A549 (cell line): ENCODE measurements at regions of chr19 and their contacts with region 1.

Region 1: GRCh38 chr19:13588957-13589833 is 82.9 kb upstream of the CACNA1A start:
- DNase-seq: peak; percentile 40 to 65
- ATAC-seq: peak; percentile 98 to 99
- H3K4me3 ChIP-seq: no peak overlapping the region
- H3K27ac ChIP-seq: no peak overlapping the region
- H3K4me1 ChIP-seq: no peaks in the 10 kb centered on the region
- CTCF ChIP-seq: peak; percentile 85
- EP300 ChIP-seq: no peak
- POLR2A ChIP-seq: no peak
- RAD21 ChIP-seq: peak; percentile 60 to 73; a peak in 4 of 5 replicates

Region 2: DNA sequence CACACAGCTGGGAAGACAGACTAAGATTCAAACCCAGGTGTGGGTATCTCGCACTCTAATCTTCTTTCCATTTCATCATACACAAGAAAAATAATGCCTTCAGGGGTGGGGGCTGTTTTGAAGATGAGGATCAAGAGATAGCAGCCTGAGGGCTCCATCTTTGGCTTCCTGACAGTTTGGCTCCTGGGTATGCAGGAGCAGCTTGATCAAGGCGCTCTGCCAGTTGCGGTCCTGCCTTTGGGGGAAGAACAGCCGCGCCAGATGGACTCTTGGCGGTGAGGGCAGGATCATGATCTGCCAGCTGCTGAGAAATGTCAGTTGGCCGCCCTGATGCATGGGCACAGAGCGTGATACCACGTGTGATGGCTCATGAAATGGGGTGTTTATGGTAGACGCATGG is 319.8 kb before region 1 on chr19:
- CTCF ChIA-PET with region 1: interaction called, 14 read pairs
- POLR2A ChIA-PET with region 1: no interaction called
- DNase-seq: no peak
- ATAC-seq: no peak
- H3K4me3 ChIP-seq: no peak overlapping the region
- H3K27ac ChIP-seq: no peak overlapping the region
- H3K4me1 ChIP-seq: no peaks in the 10 kb centered on the region
- CTCF ChIP-seq: no peak
- EP300 ChIP-seq: no peak
- POLR2A ChIP-seq: no peak
- RAD21 ChIP-seq: no peak

Region 3: GRCh38 chr19:13492128-13492527 is 97.1 kb before region 1 on chr19:
- CTCF ChIA-PET with region 1: no interaction called
- POLR2A ChIA-PET with region 1: no interaction called
- DNase-seq: peak in 1 of 2 experiments; percentile 4
- ATAC-seq: peak in 1 of 2 experiments; percentile 39; a peak in 2 of 6 replicates
- H3K4me3 ChIP-seq: no peak overlapping the region
- H3K27ac ChIP-seq: no peak overlapping the region
- H3K4me1 ChIP-seq: no peaks in the 10 kb centered on the region
- CTCF ChIP-seq: no peak
- EP300 ChIP-seq: no peak
- POLR2A ChIP-seq: no peak
- RAD21 ChIP-seq: no peak